ENCODE measurements at regions of chr15 and their contacts with region 1.

Region 1: DNA sequence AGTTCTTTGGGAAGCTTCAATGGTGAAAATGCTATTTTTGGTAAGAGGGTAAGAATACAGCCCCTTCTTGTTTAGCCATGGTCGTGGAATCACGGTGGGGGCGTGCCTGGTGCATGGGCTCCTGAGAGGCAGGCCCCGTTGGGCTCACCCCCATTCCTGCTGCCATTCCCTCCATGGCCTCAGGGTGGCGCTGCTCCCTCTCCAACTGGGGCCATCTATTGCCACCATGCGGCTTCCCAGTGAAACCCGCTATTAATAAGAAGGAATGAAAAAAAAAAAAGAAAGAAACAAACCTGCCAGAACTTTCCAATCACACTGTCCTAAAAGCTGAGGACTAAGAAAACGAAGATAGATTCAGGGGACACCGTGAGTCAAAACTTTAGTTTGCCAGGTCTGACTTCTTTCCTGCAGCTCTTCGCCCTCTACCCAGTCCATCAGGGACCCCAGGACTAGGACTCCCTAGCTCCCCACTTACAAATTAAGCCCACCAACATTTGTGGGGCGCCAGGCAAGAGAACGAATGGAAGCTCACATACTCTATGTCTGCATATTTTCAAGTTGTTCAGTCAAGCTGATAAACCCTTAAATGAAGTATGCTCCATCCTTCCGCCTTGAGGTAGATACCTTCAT is 30.6 kb upstream of the ABHD2 start:
- DNase-seq: peak; percentile 77 to 85 (median 83)
- ATAC-seq: peak; percentile 97 to 100 (median 98)
- H3K4me3 ChIP-seq: no peak overlapping the region
- H3K27ac ChIP-seq: no peak overlapping the region
- H3K4me1 ChIP-seq: no peaks in the 10 kb centered on the region
- H3K27me3 ChIP-seq: no peaks in the 10 kb centered on the region
- CTCF ChIP-seq: peak; percentile 97 to 99 (median 99)
- POLR2A ChIP-seq: no peak

Region 2: DNA sequence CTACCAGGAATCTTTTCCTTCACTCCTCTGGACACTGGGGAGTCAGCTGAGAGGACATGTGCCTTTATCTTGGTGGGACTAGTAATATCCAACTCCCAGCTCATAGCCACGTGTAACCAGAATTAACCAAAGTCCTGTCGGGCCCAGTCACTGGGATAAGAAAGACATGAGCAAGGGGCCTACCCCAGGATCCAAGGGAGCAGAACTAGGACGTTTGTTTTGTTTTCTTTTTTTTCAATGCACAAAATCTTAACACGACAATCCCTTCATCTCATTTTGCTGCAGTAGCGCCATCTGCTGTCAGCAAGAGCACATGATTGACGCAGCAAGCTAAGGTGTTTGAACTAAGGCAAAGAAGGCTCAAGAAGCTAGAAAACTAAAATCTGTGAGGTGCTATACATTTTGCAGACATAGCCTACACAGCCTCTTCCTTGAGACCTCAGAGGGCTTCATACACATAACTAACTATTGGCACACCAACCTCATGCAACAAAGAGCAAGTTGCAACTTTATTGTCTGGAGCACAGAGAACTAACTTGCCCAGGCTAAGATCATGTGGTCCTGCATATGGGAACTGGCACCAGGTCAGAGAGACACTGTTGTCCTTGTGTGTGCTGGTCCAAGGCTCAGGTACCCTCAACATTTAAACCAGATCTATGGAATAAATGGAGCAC is 120.2 kb after region 1 on chr15:
- intact Hi-C with region 1: loop called (anchors 5 to 10 kb)
- DNase-seq: no peak
- ATAC-seq: peak; percentile 10 to 72 (median 51)
- H3K4me3 ChIP-seq: no peak overlapping the region
- H3K27ac ChIP-seq: no peak overlapping the region
- H3K4me1 ChIP-seq: no peaks in the 10 kb centered on the region
- H3K27me3 ChIP-seq: no peaks in the 10 kb centered on the region
- CTCF ChIP-seq: peak; percentile 71 to 79 (median 75)
- POLR2A ChIP-seq: no peak